ENCODE measurements at regions of chr17 and their contacts with region 1.

Region 1: GRCh38 chr17:69246726-69247375 is 18.2 kb upstream of the ABCA10 start:
- DNase-seq: no peak
- H3K4me3 ChIP-seq: no peak overlapping the region
- H3K27ac ChIP-seq: no peak overlapping the region
- H3K4me1 ChIP-seq: no peaks in the 10 kb centered on the region
- H3K27me3 ChIP-seq: no peaks in the 10 kb centered on the region
- CTCF ChIP-seq: peak; percentile 45 to 61 (median 49)
- EP300 ChIP-seq: no peak
- POLR2A ChIP-seq: no peak

Region 2: DNA sequence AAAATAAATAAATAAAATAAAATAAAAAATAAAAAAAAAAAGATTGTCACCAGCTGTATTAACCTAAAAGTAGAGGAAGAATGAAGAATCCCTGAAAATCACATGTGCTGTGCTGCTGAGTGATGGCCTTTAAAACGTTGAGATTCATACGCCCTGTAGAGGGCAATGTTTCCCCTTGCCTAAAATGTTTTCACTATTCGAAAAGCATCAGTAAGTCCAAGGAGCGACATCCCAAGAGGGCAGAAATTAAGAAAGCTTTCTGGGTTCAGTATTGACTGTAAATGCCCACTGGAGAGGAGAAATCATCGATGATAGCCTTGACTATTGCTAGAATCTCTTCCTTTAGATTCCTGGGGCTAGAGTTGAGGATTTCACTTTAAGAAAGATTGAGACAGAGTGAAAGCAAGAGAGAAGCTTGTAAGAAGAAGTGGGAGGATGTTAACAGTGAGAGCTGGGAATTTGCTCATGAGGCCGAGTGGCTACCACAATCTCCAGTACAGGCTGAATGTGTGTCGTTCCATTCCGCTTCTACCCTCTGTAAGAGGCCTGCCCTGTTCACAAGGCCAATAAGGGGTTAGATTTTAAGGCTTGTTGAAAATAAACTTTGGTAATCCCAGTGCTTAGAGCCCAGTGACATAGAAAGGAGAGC is 474.9 kb before region 1 on chr17:
- in situ Hi-C with region 1: loop called in 2 of 4 experiments (anchors 5 to 10 kb)
- intact Hi-C with region 1: no loop called
- DNase-seq: no peak
- H3K4me3 ChIP-seq: no peak overlapping the region
- H3K27ac ChIP-seq: peak overlapping the region in 3 of 4 donors; percentile 9 to 36 (median 29)
- H3K4me1 ChIP-seq: peaks cover 0 to 13% (median 4%) of the 10 kb centered on the region in 4 donors
- H3K27me3 ChIP-seq: no peaks in the 10 kb centered on the region
- CTCF ChIP-seq: peak; percentile 47 to 61 (median 56)
- EP300 ChIP-seq: no peak
- POLR2A ChIP-seq: no peak

Region 3: DNA sequence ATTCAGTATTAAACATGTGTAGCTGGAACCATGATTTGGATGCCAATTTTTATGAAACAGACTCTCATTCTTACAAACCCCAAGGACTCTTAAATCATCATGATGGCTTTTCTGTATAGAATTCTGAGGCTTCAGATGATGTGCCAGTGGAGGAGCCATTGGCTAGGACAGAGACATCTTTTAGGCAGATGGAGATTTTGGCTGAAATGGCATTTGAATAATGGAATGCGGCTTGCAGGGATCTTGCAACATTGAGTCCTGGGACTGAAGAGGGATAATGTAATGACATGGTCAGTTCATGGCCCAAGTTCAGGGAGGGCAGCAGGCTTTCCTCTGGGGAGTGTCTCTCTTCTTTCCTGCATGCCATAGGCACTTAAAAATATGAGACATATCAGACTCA is 464.1 kb before region 1 on chr17:
- in situ Hi-C with region 1: loop called in 2 of 4 experiments (anchors 5 to 10 kb)
- intact Hi-C with region 1: loop called (anchors 5 kb)
- DNase-seq: no peak
- H3K4me3 ChIP-seq: no peak overlapping the region
- H3K27ac ChIP-seq: no peak overlapping the region
- H3K4me1 ChIP-seq: peaks cover 0 to 8% (median 6%) of the 10 kb centered on the region in 4 donors
- H3K27me3 ChIP-seq: no peaks in the 10 kb centered on the region
- CTCF ChIP-seq: no peak
- EP300 ChIP-seq: no peak
- POLR2A ChIP-seq: no peak